ENCODE measurements at regions of chr5 and their contacts with region 1.

Region 1: DNA sequence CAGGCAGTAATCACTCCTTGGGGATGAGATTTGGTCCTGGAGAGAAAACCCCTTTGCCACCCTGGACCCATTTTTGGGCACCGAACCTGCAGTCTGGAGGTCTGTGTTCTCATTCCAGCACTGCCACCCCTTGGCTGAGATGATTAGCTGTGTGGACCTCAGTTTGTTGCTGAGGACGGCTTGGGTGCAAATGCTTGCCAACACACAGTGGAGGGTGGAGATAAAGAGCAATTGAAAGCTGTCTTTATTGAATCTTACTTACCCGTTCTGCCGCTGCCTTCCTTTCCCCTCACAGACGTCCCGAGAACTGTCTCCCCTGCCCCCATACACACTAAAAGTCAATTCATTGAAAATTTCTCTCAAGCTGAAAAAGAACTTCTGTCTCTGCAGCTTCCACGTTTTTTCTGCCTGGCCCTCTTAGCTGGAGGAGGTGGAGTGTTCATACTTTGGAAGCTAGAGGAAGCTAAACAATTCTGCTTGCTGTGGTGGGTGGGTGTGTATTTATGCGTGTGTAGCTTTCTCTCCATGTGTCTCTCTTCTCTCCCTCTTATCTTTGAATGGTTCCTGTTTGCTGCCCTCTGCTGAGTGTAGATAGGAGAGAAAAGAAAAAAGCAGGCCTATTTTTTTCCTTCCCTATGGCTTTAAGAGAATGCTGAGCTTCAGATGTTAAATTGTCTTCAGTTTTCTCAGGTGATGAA is 6.6 kb downstream of the GALNT10 start:
- DNase-seq: peak; percentile 51
- H3K4me3 ChIP-seq: no peak overlapping the region
- H3K27ac ChIP-seq: peak overlapping the region; percentile 21
- H3K27me3 ChIP-seq: no peaks in the 10 kb centered on the region
- CTCF ChIP-seq: peak; percentile 61

Region 2: DNA sequence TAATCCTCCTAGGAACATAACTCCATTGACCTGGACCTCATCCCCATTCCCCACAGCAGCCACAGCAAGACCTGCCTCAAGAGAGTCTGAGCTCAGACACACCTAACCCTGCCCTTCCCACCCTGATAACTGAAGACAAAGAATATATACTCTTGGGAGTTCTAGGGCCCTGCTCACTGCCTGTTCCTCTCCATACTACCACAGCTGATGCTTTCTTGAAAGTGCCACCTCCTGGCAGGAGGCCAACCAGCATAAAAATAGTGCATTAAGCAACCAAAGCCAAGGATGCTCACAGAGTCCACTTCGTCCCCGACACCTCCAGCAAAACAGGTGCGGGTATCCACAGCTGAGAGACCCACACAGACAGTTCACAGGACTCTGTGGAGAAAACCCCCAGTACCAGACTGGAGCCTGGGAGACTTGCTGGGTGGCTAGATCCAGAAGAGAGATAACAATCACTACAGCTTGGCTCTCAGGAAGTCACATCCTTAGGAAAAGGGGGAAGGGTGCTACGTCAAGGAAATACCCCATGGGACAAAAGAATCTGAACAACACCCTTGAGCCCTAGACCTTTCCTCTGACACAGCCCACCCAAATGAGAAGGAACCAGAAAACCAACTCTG is 181.9 kb before region 1 on chr5:
- CTCF ChIA-PET with region 1: no interaction called
- POLR2A ChIA-PET with region 1: no interaction called
- DNase-seq: no peak
- H3K4me3 ChIP-seq: no peak overlapping the region
- H3K27ac ChIP-seq: no peak overlapping the region
- H3K27me3 ChIP-seq: no peaks in the 10 kb centered on the region
- CTCF ChIP-seq: no peak

Region 3: GRCh38 chr5:154211641-154212390 is 14.7 kb after region 1 on chr5:
- CTCF ChIA-PET with region 1: interaction called, 24 read pairs
- POLR2A ChIA-PET with region 1: interaction called, 5 read pairs
- DNase-seq: no peak
- H3K4me3 ChIP-seq: no peak overlapping the region
- H3K27ac ChIP-seq: peak overlapping the region; percentile 52
- H3K27me3 ChIP-seq: no peaks in the 10 kb centered on the region
- CTCF ChIP-seq: no peak

Region 4: DNA sequence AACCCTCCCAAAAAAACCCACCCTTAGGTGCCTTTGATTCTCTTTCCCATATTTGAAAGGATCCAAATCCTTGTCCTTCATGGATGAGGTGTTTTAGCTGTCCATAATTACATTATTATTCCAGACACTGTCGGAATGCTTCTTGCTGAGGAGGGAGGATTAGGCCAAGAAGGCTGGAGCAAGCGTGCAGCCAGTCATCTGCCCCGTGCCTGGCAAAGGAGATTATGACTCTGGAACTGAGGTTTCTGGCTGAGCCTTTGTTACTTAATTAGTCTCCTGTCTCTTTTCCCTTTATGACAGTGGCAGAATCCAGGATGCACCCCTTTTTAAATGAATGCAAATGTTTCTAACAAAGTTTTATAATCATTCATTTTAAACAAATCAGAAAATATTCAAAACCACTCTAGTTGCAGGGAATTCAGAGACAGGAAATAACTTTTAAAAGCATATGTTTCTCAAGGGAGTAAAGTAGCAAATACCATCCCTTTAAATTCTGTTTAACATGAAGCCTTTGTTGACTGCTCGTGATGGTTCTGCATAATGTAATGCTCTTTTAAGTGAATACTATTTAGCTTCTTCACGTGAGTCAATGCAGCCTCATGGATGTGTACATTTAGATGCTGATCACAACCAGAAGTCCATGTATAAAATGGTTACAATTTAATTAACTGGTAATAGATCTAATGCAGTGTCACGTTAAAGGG is 63.3 kb after region 1 on chr5:
- CTCF ChIA-PET with region 1: interaction called, 13 read pairs
- POLR2A ChIA-PET with region 1: no interaction called
- DNase-seq: no peak
- H3K4me3 ChIP-seq: no peak overlapping the region
- H3K27ac ChIP-seq: no peak overlapping the region
- H3K27me3 ChIP-seq: no peaks in the 10 kb centered on the region
- CTCF ChIP-seq: no peak

Region 5: DNA sequence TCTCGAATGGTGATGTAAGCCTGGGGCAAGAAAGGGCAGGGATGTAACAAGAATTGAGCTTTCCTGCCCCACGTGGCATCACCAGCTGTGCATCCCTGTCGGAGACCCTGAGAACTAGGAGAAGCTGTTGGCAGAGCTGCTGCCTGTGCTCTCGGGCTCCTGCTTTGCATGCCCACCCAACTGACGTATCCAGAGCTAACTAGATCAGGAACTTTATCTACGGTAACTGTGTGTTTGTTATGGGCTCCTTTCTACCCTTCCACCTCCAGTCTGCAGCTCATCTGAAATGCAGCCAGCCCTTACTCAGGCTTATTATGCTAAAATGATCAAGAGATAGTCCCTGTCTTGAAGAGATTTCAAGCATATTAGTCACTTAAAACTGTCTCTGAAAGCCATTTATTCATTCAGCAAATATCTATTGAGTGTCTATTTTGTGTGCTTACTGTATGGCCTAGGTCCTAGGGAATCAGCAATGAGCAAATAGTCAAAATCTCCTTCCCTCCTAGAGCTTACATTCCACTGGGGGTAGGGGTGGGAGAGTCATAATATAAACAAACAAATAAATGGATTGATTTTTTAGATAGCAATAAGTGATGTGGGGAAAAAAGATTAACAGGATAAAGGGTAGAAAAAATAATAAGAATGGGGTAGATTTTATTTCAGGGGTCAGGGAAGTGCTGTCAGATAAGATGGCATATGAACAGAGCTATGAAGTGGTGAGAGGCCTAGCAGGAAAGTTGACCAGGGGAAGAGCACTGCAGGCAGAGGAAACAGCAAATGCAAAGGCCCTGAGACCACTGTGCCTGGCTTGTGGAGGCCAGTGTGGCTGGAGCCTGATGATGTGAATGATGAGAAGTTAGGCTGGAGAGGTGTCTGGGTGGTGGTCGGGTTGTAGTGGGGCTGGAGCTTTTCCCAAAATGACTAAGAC is 111.6 kb after region 1 on chr5:
- CTCF ChIA-PET with region 1: interaction called, 12 read pairs
- POLR2A ChIA-PET with region 1: interaction called, 5 read pairs
- DNase-seq: no peak
- H3K4me3 ChIP-seq: no peak overlapping the region
- H3K27ac ChIP-seq: peak overlapping the region; percentile 59
- H3K27me3 ChIP-seq: no peaks in the 10 kb centered on the region
- CTCF ChIP-seq: no peak

Region 6: GRCh38 chr5:154478224-154478565 is 281.1 kb after region 1 on chr5 and contains the start of gene HAND1:
- CTCF ChIA-PET with region 1: no interaction called
- POLR2A ChIA-PET with region 1: no interaction called
- DNase-seq: no peak
- H3K4me3 ChIP-seq: no peak within 1 kb of the TSS
- H3K27ac ChIP-seq: no peak within 1 kb of the TSS
- H3K27me3 ChIP-seq: peaks cover 99% of the 10 kb centered on the region
- CTCF ChIP-seq: no peak
- polyA plus RNA-seq, gene HAND1: not detected in 2 replicates

Measured in AG04450 (cell line).